ENCODE measurements at regions of chr18 and their contacts with region 1.

Region 1: GRCh38 chr18:59823596-59824195 is 76.1 kb upstream of the PMAIP1 start:
- DNase-seq: peak; percentile 86
- ATAC-seq: peak; percentile 97
- H3K4me3 Mint-ChIP-seq: no peak overlapping the region
- H3K27ac Mint-ChIP-seq: no peak overlapping the region
- H3K4me1 Mint-ChIP-seq: peaks cover 6% of the 10 kb centered on the region; the same call in 1 of the 2 replicates
- H3K27me3 Mint-ChIP-seq: no peaks in the 10 kb centered on the region
- CTCF ChIP-seq: peak; percentile 84

Region 2: DNA sequence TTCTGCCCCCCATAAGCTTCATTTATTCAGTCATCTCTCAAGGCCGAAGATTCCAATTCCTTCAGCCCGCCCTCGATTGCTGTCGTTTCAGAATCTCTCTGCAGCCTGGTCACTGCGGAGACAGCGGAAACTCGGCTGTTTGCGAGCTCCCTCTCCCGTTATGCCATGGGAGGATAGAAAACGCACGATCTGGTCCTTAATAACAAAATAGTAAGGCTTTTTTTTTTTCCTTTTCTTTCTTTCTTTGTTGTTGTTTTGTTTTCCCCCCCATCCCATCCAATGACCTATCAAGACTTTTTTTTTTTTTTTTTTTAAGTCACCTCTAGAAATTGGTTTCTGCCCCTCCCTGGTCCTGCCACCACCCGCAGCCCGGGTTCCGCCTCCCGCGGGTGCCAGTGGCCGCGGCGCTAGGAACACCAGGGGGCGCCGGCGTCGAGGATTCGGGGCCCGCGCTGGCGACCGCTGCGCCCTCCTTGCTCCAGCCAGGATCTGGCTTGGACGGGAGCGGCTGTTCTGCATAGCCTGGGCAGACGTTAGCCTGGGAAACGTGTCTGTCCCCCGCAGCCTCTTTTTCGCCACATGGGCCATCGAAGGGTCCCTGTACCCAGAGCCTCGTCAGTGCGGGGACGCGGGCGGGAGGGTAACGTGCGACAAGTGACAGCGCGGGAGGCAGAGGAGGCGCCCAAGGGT is 515.3 kb before region 1 on chr18:
- CTCF ChIA-PET with region 1: interaction called, 21 read pairs
- POLR2A ChIA-PET with region 1: no interaction called
- DNase-seq: peak; percentile 81
- ATAC-seq: peak; percentile 91
- H3K4me3 Mint-ChIP-seq: peak overlapping the region; percentile 48
- H3K27ac Mint-ChIP-seq: no peak overlapping the region
- H3K4me1 Mint-ChIP-seq: no peaks in the 10 kb centered on the region
- H3K27me3 Mint-ChIP-seq: peaks cover 67% of the 10 kb centered on the region
- CTCF ChIP-seq: peak; percentile 20; the same call in 1 of the 2 replicates

Region 3: GRCh38 chr18:59459369-59460079 is 364.2 kb before region 1 on chr18:
- CTCF ChIA-PET with region 1: interaction called, 109 read pairs
- POLR2A ChIA-PET with region 1: no interaction called
- DNase-seq: no peak
- ATAC-seq: peak; percentile 46; the same call in 1 of the 2 replicates
- H3K4me3 Mint-ChIP-seq: no peak overlapping the region
- H3K27ac Mint-ChIP-seq: no peak overlapping the region
- H3K4me1 Mint-ChIP-seq: peaks cover 22% of the 10 kb centered on the region
- H3K27me3 Mint-ChIP-seq: no peaks in the 10 kb centered on the region
- CTCF ChIP-seq: peak; percentile 62

Region 4: GRCh38 chr18:59623456-59624368 is 200.0 kb before region 1 on chr18:
- CTCF ChIA-PET with region 1: interaction called, 13 read pairs
- POLR2A ChIA-PET with region 1: no interaction called
- DNase-seq: no peak
- ATAC-seq: no peak
- H3K4me3 Mint-ChIP-seq: no peak overlapping the region
- H3K27ac Mint-ChIP-seq: no peak overlapping the region
- H3K4me1 Mint-ChIP-seq: 0 out of 2 replicates have a peak, but pooled peaks cover 6% of the 10 kb centered on the region
- H3K27me3 Mint-ChIP-seq: no peaks in the 10 kb centered on the region
- CTCF ChIP-seq: no peak

Region 5: GRCh38 chr18:59646228-59646962 is 177.3 kb before region 1 on chr18:
- CTCF ChIA-PET with region 1: interaction called, 12 read pairs
- POLR2A ChIA-PET with region 1: no interaction called
- DNase-seq: peak; percentile 37
- ATAC-seq: peak; percentile 89
- H3K4me3 Mint-ChIP-seq: no peak overlapping the region
- H3K27ac Mint-ChIP-seq: no peak overlapping the region
- H3K4me1 Mint-ChIP-seq: peaks cover 33% of the 10 kb centered on the region
- H3K27me3 Mint-ChIP-seq: no peaks in the 10 kb centered on the region
- CTCF ChIP-seq: 0 out of 2 replicates have a peak, but pooled peaks have one; percentile 17

Region 6: GRCh38 chr18:59763541-59764136 is 60.1 kb before region 1 on chr18:
- CTCF ChIA-PET with region 1: interaction called, 15 read pairs
- POLR2A ChIA-PET with region 1: no interaction called
- DNase-seq: no peak
- ATAC-seq: no peak
- H3K4me3 Mint-ChIP-seq: no peak overlapping the region
- H3K27ac Mint-ChIP-seq: no peak overlapping the region
- H3K4me1 Mint-ChIP-seq: no peaks in the 10 kb centered on the region
- H3K27me3 Mint-ChIP-seq: no peaks in the 10 kb centered on the region
- CTCF ChIP-seq: no peak

Region 7: GRCh38 chr18:59837586-59837985 is 13.9 kb after region 1 on chr18:
- CTCF ChIA-PET with region 1: interaction called, 43 read pairs
- POLR2A ChIA-PET with region 1: no interaction called
- DNase-seq: peak; percentile 57
- ATAC-seq: peak; percentile 58
- H3K4me3 Mint-ChIP-seq: no peak overlapping the region
- H3K27ac Mint-ChIP-seq: no peak overlapping the region
- H3K4me1 Mint-ChIP-seq: peaks cover 43% of the 10 kb centered on the region
- H3K27me3 Mint-ChIP-seq: no peaks in the 10 kb centered on the region; the same call in 1 of the 2 replicates
- CTCF ChIP-seq: peak; percentile 87

Region 8: DNA sequence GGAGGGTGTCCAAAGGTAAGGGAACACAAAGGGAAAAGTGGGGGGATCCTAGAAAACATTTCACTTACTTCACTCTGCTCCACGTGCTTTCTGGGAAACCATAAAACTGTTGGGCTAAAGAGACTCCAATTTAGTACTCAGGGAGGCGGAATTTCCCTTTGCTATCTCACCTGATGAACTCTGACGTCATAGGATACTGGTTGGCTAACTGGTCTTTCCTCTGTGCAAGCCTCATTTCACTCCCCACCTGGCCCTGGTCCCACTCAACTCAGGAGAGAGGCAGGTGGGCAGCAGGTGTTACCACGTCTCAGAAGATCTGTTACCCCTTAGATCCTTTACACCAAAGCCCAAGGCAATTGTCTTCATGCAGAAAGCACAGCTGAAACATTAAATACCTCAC is 24.3 kb after region 1 on chr18:
- CTCF ChIA-PET with region 1: no interaction called
- POLR2A ChIA-PET with region 1: no interaction called
- DNase-seq: no peak
- ATAC-seq: no peak
- H3K4me3 Mint-ChIP-seq: no peak overlapping the region
- H3K27ac Mint-ChIP-seq: no peak overlapping the region
- H3K4me1 Mint-ChIP-seq: peaks cover 17% of the 10 kb centered on the region
- H3K27me3 Mint-ChIP-seq: no peaks in the 10 kb centered on the region; the same call in 1 of the 2 replicates
- CTCF ChIP-seq: no peak

Measured in WTC11 (cell line).